PC-9 (cell line): ENCODE measurements at regions of chr17 and their contacts with region 1.

Region 1: DNA sequence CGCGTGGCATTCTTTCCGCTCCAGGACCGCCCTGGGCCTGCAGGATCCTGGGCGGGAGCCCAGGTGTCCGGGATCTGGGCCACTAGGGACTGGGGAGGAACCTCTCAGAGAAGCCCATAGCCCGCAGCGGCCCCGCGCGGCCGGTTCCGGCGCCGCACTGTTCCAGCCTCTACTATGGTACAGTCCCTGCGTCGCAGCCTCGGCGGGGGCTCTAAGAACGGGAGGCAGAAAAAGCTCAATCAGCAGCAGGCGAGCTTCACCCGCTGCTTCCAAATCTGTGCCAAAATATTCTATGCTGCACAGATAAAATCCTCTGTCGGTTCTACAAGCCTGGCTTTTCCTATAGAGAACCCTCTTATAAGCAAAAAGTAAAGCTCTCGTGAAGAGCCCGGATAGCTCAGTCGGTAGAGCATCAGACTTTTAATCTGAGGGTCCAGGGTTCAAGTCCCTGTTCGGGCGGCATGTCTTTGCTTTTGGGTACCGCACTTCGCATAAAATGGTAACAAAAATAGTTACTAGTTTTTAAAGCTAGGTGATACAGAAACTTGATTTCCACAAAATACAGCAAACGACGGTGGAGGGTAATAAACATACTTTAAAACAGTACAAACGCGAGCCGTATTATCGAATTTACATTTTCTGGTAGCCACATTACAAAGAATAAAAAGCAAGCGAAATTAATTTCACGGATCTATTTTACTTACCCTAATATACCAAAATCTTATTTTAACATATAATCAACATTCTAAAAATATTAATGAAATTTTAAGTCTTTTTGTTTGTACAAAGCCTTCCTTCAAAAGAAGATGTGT is 661 bp upstream of the ALOXE3 start:
- DNase-seq: peak; percentile 67 to 87
- H3K4me3 ChIP-seq: peak overlapping the region; percentile 87
- H3K27ac ChIP-seq: peak overlapping the region; percentile 87
- H3K4me1 ChIP-seq: peaks cover 11% of the 10 kb centered on the region
- H3K27me3 ChIP-seq: no peaks in the 10 kb centered on the region
- CTCF ChIP-seq: peak; percentile 74

Region 2: GRCh38 chr17:7956228-7956965 is 162.6 kb before region 1 on chr17:
- CTCF ChIA-PET with region 1: no interaction called
- POLR2A ChIA-PET with region 1: no interaction called
- intact Hi-C with region 1: no loop called
- DNase-seq: no peak
- H3K4me3 ChIP-seq: no peak overlapping the region
- H3K27ac ChIP-seq: no peak overlapping the region
- H3K4me1 ChIP-seq: peaks cover 5% of the 10 kb centered on the region; the same call in 1 of the 2 replicates
- H3K27me3 ChIP-seq: no peaks in the 10 kb centered on the region
- CTCF ChIP-seq: no peak

Region 3: GRCh38 chr17:8057691-8058114 is 61.3 kb before region 1 on chr17:
- CTCF ChIA-PET with region 1: no interaction called
- POLR2A ChIA-PET with region 1: no interaction called
- intact Hi-C with region 1: no loop called
- DNase-seq: peak; percentile 61 to 63
- H3K4me3 ChIP-seq: no peak overlapping the region; the same call in 1 of the 2 replicates
- H3K27ac ChIP-seq: no peak overlapping the region
- H3K4me1 ChIP-seq: peaks cover 28% of the 10 kb centered on the region
- H3K27me3 ChIP-seq: peaks cover 5% of the 10 kb centered on the region
- CTCF ChIP-seq: peak; percentile 74

Region 4: GRCh38 chr17:8073627-8074484 is 45.1 kb before region 1 on chr17:
- CTCF ChIA-PET with region 1: interaction called, 4 read pairs
- POLR2A ChIA-PET with region 1: no interaction called
- intact Hi-C with region 1: loop called (anchors 2 kb)
- DNase-seq: peak in 1 of 2 experiments; percentile 77
- H3K4me3 ChIP-seq: no peak overlapping the region
- H3K27ac ChIP-seq: no peak overlapping the region
- H3K4me1 ChIP-seq: no peaks in the 10 kb centered on the region
- H3K27me3 ChIP-seq: peaks cover 16% of the 10 kb centered on the region
- CTCF ChIP-seq: peak; percentile 76

Region 5: GRCh38 chr17:8138672-8139371 is 19.8 kb after region 1 on chr17:
- CTCF ChIA-PET with region 1: interaction called, 8 read pairs
- POLR2A ChIA-PET with region 1: no interaction called
- intact Hi-C with region 1: loop called (anchors 1 kb)
- DNase-seq: peak; percentile 92 to 99
- H3K4me3 ChIP-seq: peak overlapping the region; percentile 78
- H3K27ac ChIP-seq: peak overlapping the region; percentile 69
- H3K4me1 ChIP-seq: peaks cover 14% of the 10 kb centered on the region
- H3K27me3 ChIP-seq: no peaks in the 10 kb centered on the region
- CTCF ChIP-seq: peak; percentile 78

Region 6: GRCh38 chr17:8173056-8173870 is 54.3 kb after region 1 on chr17:
- CTCF ChIA-PET with region 1: no interaction called
- POLR2A ChIA-PET with region 1: interaction called, 11 read pairs
- intact Hi-C with region 1: no loop called
- DNase-seq: peak; percentile 79 to 96
- H3K4me3 ChIP-seq: peak overlapping the region; percentile 63
- H3K27ac ChIP-seq: peak overlapping the region; percentile 93
- H3K4me1 ChIP-seq: 0 out of 2 replicates have a peak, but pooled peaks cover 7% of the 10 kb centered on the region
- H3K27me3 ChIP-seq: no peaks in the 10 kb centered on the region
- CTCF ChIP-seq: no peak

Region 7: GRCh38 chr17:8300627-8301242 is 181.8 kb after region 1 on chr17:
- CTCF ChIA-PET with region 1: no interaction called
- POLR2A ChIA-PET with region 1: no interaction called
- intact Hi-C with region 1: loop called (anchors 2 kb)
- DNase-seq: peak; percentile 42 to 58
- H3K4me3 ChIP-seq: no peak overlapping the region
- H3K27ac ChIP-seq: no peak overlapping the region
- H3K4me1 ChIP-seq: no peaks in the 10 kb centered on the region
- H3K27me3 ChIP-seq: no peaks in the 10 kb centered on the region
- CTCF ChIP-seq: peak; percentile 82